MCF 10A (cell line): ENCODE measurements at regions of chr10 and their contacts with region 1.

Region 1: GRCh38 chr10:28663576-28664313 is 13.6 kb upstream of the BAMBI start:
- DNase-seq: peak; percentile 84
- H3K4me3 Mint-ChIP-seq: no peak overlapping the region
- H3K27ac Mint-ChIP-seq: no peak overlapping the region
- H3K4me1 Mint-ChIP-seq: peaks cover 18% of the 10 kb centered on the region
- H3K27me3 Mint-ChIP-seq: peaks cover 18% of the 10 kb centered on the region
- CTCF ChIP-seq: peak; percentile 92

Region 2: DNA sequence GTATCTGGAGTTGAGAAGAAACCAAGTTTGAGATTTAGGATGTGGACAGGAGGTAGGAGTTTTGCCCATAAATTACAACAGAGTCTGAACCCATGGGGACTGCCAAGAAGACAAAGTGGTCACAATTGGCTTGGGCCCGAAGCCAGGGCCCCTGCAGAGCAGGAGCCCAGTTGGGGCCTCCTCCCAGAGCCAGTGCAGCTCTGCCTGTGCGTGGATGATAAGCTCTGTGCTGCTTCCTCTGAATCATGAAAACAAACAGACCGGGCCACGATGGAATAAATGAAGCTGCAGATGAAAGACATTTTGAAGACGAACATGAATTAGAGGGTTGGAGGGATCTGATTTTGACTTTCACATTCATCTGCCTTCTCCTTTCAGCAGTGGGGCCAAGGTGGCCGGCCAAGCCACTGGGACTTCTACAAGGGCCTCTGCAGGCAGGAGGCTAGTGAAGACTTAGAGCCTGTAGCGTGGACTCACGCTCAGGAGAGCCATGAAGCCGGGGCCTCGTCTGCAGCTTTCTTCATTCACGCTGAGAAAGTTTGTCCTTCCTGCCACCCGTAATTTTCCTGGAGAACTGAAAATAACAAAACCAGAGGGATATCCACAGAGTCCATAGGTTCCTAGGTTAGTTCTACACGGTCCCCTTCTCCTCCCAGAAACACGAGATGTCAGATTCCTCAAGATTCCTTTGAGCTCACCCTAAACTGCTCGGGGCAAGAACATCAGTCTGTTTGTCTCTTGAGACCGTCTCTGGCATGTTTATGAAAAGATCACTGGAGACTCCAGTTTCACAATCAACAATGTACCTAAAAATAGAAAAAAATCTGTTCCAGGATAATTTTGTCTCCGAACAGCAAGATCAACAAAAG is 468.4 kb after region 1 on chr10:
- CTCF ChIA-PET with region 1: interaction called, 23 read pairs
- POLR2A ChIA-PET with region 1: interaction called, 3 read pairs
- intact Hi-C with region 1: loop called (anchors 1 kb)
- DNase-seq: peak; percentile 44
- H3K4me3 Mint-ChIP-seq: no peak overlapping the region
- H3K27ac Mint-ChIP-seq: no peak overlapping the region
- H3K4me1 Mint-ChIP-seq: peaks cover 8% of the 10 kb centered on the region
- H3K27me3 Mint-ChIP-seq: peaks cover 5% of the 10 kb centered on the region
- CTCF ChIP-seq: no peak

Region 3: GRCh38 chr10:29304264-29305030 is 640.7 kb after region 1 on chr10:
- CTCF ChIA-PET with region 1: interaction called, 19 read pairs
- POLR2A ChIA-PET with region 1: interaction called, 4 read pairs
- intact Hi-C with region 1: loop called (anchors 1 kb)
- DNase-seq: peak; percentile 78
- H3K4me3 Mint-ChIP-seq: no peak overlapping the region
- H3K27ac Mint-ChIP-seq: no peak overlapping the region
- H3K4me1 Mint-ChIP-seq: no peaks in the 10 kb centered on the region
- H3K27me3 Mint-ChIP-seq: peaks cover 12% of the 10 kb centered on the region
- CTCF ChIP-seq: peak; percentile 83

Region 4: GRCh38 chr10:29392376-29393021 is 728.8 kb after region 1 on chr10:
- CTCF ChIA-PET with region 1: no interaction called
- POLR2A ChIA-PET with region 1: no interaction called
- intact Hi-C with region 1: loop called (anchors 5 kb)
- DNase-seq: peak; percentile 68
- H3K4me3 Mint-ChIP-seq: no peak overlapping the region
- H3K27ac Mint-ChIP-seq: no peak overlapping the region
- H3K4me1 Mint-ChIP-seq: no peaks in the 10 kb centered on the region
- H3K27me3 Mint-ChIP-seq: peaks cover 34% of the 10 kb centered on the region
- CTCF ChIP-seq: peak; percentile 48